ENCODE measurements at regions of chr11 and their contacts with region 1.

Region 1: GRCh38 chr11:20127671-20128527 is 32.4 kb downstream of the DBX1 start:
- DNase-seq: peak; percentile 81 to 91
- H3K4me3 ChIP-seq: no peak overlapping the region
- H3K27ac ChIP-seq: no peak overlapping the region
- H3K4me1 ChIP-seq: peaks cover 6 to 12% (median 11%) of the 10 kb centered on the region in 4 donors
- H3K27me3 ChIP-seq: peaks cover 0 to 17% (median 7%) of the 10 kb centered on the region in 3 donors
- CTCF ChIP-seq: peak in 5 of 7 experiments; percentile 68 to 81 (median 74)
- EP300 ChIP-seq: no peak
- POLR2A ChIP-seq: no peak

Region 2: DNA sequence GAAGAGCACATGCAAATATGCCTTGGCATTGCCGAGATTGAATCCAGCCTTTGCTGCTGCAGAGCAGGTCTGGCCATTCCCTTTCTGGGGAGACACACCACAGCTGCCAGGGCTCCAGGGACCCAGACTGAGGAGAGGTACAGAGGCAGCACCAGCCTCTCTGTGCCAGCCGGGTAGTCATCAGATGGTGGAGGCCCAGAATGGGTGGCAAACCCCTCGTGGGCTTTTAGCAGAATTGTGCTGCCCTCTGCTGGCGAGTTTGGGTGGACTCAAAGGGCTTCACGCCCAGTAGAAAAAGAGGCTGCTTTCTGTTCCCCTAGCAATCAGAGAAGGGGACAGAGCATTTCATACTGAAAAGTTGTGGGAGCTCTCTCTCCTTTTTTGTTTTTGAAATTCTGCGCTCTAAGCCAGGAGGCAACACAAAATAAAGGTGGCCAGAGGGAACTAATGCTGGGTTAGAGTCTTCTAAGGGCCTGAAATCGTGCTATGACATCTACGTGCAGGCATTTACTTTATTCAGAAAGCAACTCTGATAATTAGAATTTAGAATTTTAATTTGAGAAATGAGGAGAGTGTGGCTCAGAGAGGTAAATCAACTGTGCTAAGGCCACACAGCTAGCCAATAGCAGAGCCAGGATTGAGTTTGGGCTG is 574.1 kb before region 1 on chr11:
- intact Hi-C with region 1: loop called (anchors 5 kb)
- DNase-seq: peak; percentile 89 to 91
- H3K4me3 ChIP-seq: no peak overlapping the region
- H3K27ac ChIP-seq: no peak overlapping the region
- H3K4me1 ChIP-seq: peaks cover 0 to 10% (median 3%) of the 10 kb centered on the region in 4 donors
- H3K27me3 ChIP-seq: no peaks in the 10 kb centered on the region
- CTCF ChIP-seq: peak in 6 of 7 experiments; percentile 30 to 89 (median 84)
- EP300 ChIP-seq: no peak
- POLR2A ChIP-seq: no peak

Region 3: DNA sequence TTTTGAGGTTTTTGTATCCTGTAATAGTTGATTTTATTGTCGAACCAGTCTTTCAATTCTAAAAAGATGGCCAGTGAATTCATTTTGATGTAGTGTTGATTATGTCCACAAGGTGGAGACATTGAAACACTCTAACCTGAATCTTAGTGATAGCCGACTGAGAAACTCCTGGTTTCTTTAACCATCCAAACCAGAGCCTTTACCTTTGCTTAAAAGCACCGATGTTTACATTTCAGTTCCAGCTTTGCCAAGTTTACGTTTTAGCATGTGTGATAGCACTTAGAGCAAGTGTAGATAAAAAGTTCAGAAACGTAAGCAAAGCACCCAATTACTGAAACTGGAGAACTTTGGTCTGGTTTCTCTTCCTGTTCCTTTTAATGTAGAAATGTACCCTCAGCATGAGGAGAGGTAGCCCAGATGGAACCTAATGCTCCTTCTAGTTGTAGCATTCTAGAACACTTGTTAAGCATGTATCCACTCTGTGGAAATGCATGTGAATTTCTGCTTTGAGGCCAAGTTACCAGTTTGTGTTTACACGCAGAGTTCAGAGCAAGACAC is 176.3 kb before region 1 on chr11:
- intact Hi-C with region 1: loop called (anchors 5 kb)
- DNase-seq: peak in 1 of 2 donors; percentile 85
- H3K4me3 ChIP-seq: no peak overlapping the region
- H3K27ac ChIP-seq: peak overlapping the region in 3 of 5 donors; percentile 9 to 36 (median 21)
- H3K4me1 ChIP-seq: peaks cover 0 to 43% (median 26%) of the 10 kb centered on the region in 4 donors
- H3K27me3 ChIP-seq: no peaks in the 10 kb centered on the region
- CTCF ChIP-seq: peak in 5 of 7 experiments; percentile 34 to 88 (median 56)
- EP300 ChIP-seq: no peak
- POLR2A ChIP-seq: no peak

Region 4: GRCh38 chr11:20013346-20014066 is 114.4 kb before region 1 on chr11:
- intact Hi-C with region 1: no loop called
- DNase-seq: peak in 1 of 2 donors; percentile 69
- H3K4me3 ChIP-seq: no peak overlapping the region
- H3K27ac ChIP-seq: no peak overlapping the region
- H3K4me1 ChIP-seq: peaks cover 0 to 22% (median 8%) of the 10 kb centered on the region in 4 donors
- H3K27me3 ChIP-seq: no peaks in the 10 kb centered on the region
- CTCF ChIP-seq: no peak
- EP300 ChIP-seq: no peak
- POLR2A ChIP-seq: no peak

Region 5: DNA sequence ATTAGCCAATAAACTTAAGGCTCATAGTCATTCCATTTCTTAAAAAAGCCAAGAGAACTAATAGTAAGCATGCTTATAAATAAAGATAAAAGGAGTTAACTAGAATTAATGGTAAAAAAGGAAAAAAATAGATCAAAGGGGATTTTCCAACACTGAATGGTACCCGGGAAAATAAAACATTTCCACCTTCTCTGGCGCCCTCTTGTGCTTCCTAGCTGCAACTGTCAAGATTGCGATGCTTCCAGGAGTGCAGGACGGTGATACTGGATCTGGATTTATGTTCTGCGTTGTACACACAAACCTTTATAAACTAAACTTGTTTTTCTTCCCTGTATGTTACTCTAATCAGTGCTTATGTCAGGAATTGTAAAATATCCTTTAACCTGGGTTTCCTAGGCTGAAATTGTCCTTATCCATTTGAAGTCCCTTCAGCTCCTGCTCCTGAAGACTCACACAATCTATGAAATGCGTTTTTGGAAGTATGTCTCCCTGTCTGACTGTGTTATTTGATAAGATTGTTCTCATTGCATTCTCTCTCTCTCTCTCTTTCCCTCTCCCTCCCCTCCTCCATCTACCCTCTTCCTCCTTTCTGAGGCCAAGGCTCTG is 226.0 kb after region 1 on chr11:
- intact Hi-C with region 1: loop called (anchors 5 kb)
- DNase-seq: peak; percentile 29 to 65
- H3K4me3 ChIP-seq: no peak overlapping the region
- H3K27ac ChIP-seq: no peak overlapping the region
- H3K4me1 ChIP-seq: no peaks in the 10 kb centered on the region
- H3K27me3 ChIP-seq: peaks cover 0 to 3% (median 0%) of the 10 kb centered on the region in 3 donors
- CTCF ChIP-seq: peak in 5 of 7 experiments; percentile 20 to 73 (median 62)
- EP300 ChIP-seq: no peak
- POLR2A ChIP-seq: no peak

Region 6: DNA sequence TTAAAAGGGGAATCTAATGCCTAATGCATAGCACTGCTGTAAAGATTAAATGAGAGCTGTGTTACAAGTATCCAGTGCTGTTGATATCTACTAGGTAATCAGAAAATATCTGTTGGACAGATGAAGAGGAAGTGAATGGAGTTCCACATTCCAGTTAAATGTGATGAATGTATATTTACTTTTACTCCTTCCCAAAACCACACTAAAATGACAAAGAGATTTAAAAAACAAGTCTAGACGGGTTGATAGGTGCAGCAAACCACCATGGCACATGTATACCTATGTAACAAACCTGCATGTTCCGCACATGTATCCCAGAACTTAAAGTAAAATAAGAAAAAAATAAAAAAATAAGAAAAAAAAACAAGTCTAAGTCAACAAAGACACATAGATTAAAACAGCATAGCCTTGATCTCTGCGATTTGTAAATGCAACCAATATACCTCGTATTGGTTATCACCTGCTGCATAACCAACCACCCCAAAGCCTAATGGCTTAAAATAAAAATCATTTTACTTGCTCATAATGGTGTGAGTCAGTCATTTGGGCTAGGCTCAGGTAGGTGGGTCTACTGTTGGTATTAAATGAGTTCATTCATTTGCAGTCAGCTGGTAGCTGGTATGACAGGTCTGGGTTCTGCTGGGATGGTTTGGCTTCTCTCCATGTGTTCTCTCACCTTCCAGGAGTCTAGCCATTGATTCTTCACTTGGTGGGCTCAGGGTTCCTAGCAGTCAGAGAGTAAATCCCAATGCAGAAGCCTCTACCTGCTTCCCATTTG is 431.8 kb after region 1 on chr11:
- intact Hi-C with region 1: no loop called
- DNase-seq: no peak
- H3K4me3 ChIP-seq: no peak overlapping the region
- H3K27ac ChIP-seq: no peak overlapping the region
- H3K4me1 ChIP-seq: no peaks in the 10 kb centered on the region
- H3K27me3 ChIP-seq: no peaks in the 10 kb centered on the region
- CTCF ChIP-seq: no peak
- EP300 ChIP-seq: no peak
- POLR2A ChIP-seq: no peak

Region 7: DNA sequence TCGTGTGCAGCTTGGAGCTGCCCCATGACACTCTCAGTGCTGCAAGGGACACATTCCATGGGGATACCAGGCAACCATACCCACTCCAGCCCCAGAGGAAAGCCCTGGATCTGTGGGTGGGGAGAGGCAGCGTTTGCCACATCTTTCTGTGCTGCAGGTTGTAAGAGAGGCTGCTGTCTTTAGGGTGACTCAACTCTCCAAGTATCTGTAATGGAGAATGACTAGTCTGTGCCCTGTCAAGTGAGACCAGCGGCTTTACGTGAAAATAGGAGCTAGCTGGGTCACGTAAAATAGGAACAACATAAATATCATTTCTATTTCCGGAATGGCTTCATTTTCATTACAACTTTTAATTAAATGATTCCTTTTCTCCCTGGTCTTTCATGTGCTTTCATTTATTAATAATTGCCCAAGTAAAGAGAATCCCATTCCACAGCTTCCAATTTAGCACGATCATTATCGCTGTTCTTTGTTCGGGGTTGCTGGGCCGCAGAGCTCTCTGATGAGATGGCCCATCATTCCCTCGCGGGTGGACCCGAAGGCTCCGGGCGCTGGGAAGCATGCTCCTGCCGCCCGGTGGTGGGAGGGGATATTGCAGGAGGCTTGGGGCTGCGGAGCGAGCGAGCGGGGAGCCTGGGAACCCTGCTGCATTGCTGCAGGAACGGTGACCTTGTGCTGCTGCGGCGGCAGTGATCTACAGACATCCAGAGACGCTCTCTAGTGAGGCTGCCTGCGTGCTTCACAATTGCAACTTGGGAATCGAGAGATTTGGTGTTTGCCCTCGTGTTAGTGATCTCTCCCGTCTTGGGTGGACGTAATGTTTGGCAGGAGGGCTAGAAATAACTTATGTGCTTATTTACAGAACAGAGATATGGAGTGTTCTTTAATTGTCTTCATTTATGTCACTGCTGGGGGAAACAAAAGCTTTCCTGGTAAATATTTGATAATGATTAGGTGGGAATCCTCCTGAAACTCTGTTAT is 482.1 kb after region 1 on chr11:
- intact Hi-C with region 1: loop called (anchors 10 kb)
- DNase-seq: peak; percentile 81 to 88
- H3K4me3 ChIP-seq: peak overlapping the region in 1 of 4 donors; percentile 15
- H3K27ac ChIP-seq: no peak overlapping the region
- H3K4me1 ChIP-seq: peaks cover 0 to 14% (median 10%) of the 10 kb centered on the region in 4 donors
- H3K27me3 ChIP-seq: peaks cover 0 to 83% (median 54%) of the 10 kb centered on the region in 3 donors
- CTCF ChIP-seq: peak in 5 of 7 experiments; percentile 80 to 95 (median 89)
- EP300 ChIP-seq: no peak
- POLR2A ChIP-seq: no peak